Activated CD4-positive, alpha-beta T cell treated with anti-CD3 and anti-CD28 coated beads for 36 hours (primary cell): ENCODE measurements at regions of chr6 and their contacts with region 1.

Region 1: GRCh38 chr6:3258720-3259490 is at the start of gene PSMG4:
- DNase-seq: peak; percentile 97
- ATAC-seq: peak; percentile 83
- H3K4me3 Mint-ChIP-seq: peak within 1 kb of the TSS; percentile 89
- H3K27ac Mint-ChIP-seq: peak within 1 kb of the TSS; percentile 92
- H3K4me1 Mint-ChIP-seq: peaks cover 35% of the 10 kb centered on the region
- H3K27me3 Mint-ChIP-seq: peaks cover 3% of the 10 kb centered on the region
- total RNA-seq, gene PSMG4: 22.2 to 23.2 TPM

Region 2: GRCh38 chr6:2725999-2726567 is 532.8 kb before region 1 on chr6:
- CTCF ChIA-PET with region 1: no interaction called
- POLR2A ChIA-PET with region 1: no interaction called
- intact Hi-C with region 1: no loop called
- DNase-seq: no peak
- ATAC-seq: no peak
- H3K4me3 Mint-ChIP-seq: no peak overlapping the region
- H3K27ac Mint-ChIP-seq: no peak overlapping the region
- H3K4me1 Mint-ChIP-seq: no peaks in the 10 kb centered on the region
- H3K27me3 Mint-ChIP-seq: peaks cover 2% of the 10 kb centered on the region

Region 3: GRCh38 chr6:3125815-3126214 is 133.1 kb before region 1 on chr6:
- CTCF ChIA-PET with region 1: interaction called, 8 read pairs
- POLR2A ChIA-PET with region 1: interaction called, 3 read pairs
- intact Hi-C with region 1: loop called (anchors 2 kb)
- DNase-seq: no peak
- ATAC-seq: no peak
- H3K4me3 Mint-ChIP-seq: no peak overlapping the region
- H3K27ac Mint-ChIP-seq: no peak overlapping the region
- H3K4me1 Mint-ChIP-seq: peaks cover 10% of the 10 kb centered on the region
- H3K27me3 Mint-ChIP-seq: no peaks in the 10 kb centered on the region

Region 4: GRCh38 chr6:3157131-3157927 is 101.6 kb before region 1 on chr6 and contains the start of gene TUBB2A:
- CTCF ChIA-PET with region 1: no interaction called
- POLR2A ChIA-PET with region 1: no interaction called
- intact Hi-C with region 1: loop called (anchors 1 to 5 kb)
- DNase-seq: peak; percentile 87
- ATAC-seq: peak; percentile 68
- H3K4me3 Mint-ChIP-seq: peak within 1 kb of the TSS; percentile 74
- H3K27ac Mint-ChIP-seq: peak within 1 kb of the TSS; percentile 55
- H3K4me1 Mint-ChIP-seq: peaks cover 25% of the 10 kb centered on the region
- H3K27me3 Mint-ChIP-seq: peaks cover 20% of the 10 kb centered on the region
- total RNA-seq, gene TUBB2A: 1.7 to 1.8 TPM

Region 5: DNA sequence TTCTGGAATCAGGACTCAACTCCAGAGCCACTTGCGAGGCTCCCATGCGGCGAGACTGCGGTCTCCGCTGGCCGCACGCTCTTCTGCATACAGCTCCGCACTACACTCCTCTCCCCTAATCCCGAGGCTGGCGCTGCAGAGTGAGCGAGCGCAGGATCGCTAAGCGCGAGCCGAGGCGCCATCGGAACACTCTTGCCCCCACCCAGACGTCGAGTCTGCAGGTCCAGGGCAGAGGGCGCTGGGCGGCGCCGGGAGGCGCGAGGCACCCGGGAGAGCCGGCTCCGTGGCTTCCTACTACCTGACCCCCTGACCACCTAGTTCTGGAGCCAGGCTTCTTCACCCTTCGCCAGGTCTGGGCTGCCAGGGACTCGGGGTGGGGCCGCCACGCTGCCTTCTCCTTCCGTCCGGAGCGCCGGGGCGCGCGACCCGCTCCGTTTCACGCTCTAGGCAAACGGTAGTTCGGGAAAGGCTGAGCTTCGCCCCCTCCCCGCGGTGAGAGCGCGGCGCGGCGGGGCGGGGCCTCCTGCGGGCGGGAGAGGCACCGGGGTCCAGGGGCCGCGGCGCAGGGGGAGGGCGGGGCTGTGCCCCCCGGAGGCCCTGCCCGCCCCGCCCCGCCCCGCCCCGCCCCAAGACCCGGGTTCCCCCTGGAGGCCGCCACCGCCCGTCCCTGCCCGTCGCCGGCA is 96.2 kb before region 1 on chr6:
- CTCF ChIA-PET with region 1: no interaction called
- POLR2A ChIA-PET with region 1: no interaction called
- intact Hi-C with region 1: loop called (anchors 1 to 5 kb)
- DNase-seq: peak; percentile 74
- ATAC-seq: peak; percentile 84
- H3K4me3 Mint-ChIP-seq: peak overlapping the region; percentile 66
- H3K27ac Mint-ChIP-seq: peak overlapping the region; percentile 47
- H3K4me1 Mint-ChIP-seq: peaks cover 30% of the 10 kb centered on the region
- H3K27me3 Mint-ChIP-seq: peaks cover 28% of the 10 kb centered on the region

Region 6: DNA sequence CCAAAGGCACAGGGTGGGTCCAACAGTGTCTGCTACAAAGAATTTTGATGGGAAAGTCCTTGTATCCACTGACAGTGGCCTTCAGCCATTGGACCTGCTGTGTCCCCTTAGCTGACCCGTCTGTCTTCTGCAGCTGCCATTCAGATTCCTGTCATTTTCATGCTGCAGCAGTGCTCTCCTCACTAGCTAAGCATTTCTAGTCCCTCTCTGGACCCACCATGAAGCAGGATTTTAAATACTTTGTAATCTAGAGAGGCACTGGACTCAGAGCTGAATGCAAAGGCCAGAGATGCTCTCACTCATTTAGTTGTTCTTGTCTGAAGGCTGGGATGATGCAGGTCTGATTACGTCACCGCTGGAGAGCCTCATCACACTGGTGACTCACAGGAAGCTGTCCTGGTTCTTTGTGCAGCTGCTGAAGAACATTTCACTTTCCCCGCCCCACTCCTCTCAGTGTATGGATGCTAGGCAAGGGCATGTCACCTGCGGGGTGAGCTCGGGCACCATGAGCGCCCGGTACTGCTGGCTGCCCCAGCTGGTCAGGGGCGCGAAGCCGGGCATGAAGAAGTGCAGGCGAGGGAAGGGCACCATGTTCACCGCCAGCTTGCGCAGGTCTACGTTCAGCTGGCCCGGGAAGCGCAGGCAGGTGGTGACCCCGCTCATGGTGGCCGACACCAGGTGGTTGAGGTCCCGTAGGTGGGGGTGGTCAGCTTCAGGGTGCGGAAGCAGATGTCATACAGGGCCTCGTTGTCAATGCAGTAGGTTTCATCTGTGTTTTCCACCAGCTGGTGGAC is 82.1 kb before region 1 on chr6:
- CTCF ChIA-PET with region 1: no interaction called
- POLR2A ChIA-PET with region 1: no interaction called
- intact Hi-C with region 1: no loop called
- DNase-seq: peak; percentile 76
- ATAC-seq: peak; percentile 96
- H3K4me3 Mint-ChIP-seq: no peak overlapping the region
- H3K27ac Mint-ChIP-seq: no peak overlapping the region
- H3K4me1 Mint-ChIP-seq: peaks cover 2% of the 10 kb centered on the region
- H3K27me3 Mint-ChIP-seq: peaks cover 5% of the 10 kb centered on the region

Region 7: GRCh38 chr6:4135665-4136353 is 876.9 kb after region 1 on chr6:
- CTCF ChIA-PET with region 1: no interaction called
- POLR2A ChIA-PET with region 1: no interaction called
- intact Hi-C with region 1: loop called in 1 of 2 experiments (anchors 2 kb)
- DNase-seq: peak; percentile 98
- ATAC-seq: peak; percentile 92
- H3K4me3 Mint-ChIP-seq: peak overlapping the region; percentile 79
- H3K27ac Mint-ChIP-seq: peak overlapping the region; percentile 85
- H3K4me1 Mint-ChIP-seq: peaks cover 46% of the 10 kb centered on the region
- H3K27me3 Mint-ChIP-seq: no peaks in the 10 kb centered on the region